Left cardiac atrium (tissue), 4 donors: ENCODE measurements at regions of chr19 and their contacts with region 1.

Region 1: GRCh38 chr19:11209839-11210655 is 12.7 kb upstream of the KANK2 start:
- DNase-seq: no peak
- ATAC-seq: no peak

Region 2: DNA sequence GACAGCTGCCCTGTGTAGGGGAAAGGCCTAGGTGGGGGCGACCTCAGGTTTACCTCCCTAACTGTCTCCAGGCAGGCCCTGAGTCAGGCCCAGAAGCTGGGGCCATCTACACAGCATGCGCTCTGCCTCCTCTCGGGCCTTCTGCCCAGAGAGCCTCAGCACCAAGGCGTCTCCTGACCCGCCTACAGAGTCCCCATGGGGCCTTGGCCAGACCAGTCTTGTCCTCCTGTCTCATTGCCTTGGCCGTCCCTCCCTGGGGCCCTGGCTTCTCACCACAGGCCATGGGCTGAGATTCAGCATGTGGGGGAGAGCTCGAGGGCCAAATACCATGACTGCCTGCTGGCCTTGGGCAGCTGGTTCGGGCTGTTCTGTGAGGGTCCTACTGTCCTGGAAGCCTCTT is 190.2 kb before region 1 on chr19:
- intact Hi-C with region 1: loop called in 1 of 2 experiments (anchors 10 kb)
- DNase-seq: peak; percentile 74
- ATAC-seq: peak; percentile 71 to 83